Left lung (tissue), 14 donors: ENCODE measurements at regions of chr2 and their contacts with region 1.

Region 1: GRCh38 chr2:230712443-230713330 is at the start of gene CAB39:
- DNase-seq: peak; percentile 89 to 98 (median 92)
- ATAC-seq: peak; percentile 95
- H3K4me3 ChIP-seq: peak within 1 kb of the TSS; percentile 81 to 96
- H3K27ac ChIP-seq: peak within 1 kb of the TSS; percentile 93 to 96
- H3K4me1 ChIP-seq: peaks cover 24 to 67% of the 10 kb centered on the region in 2 donors
- H3K27me3 ChIP-seq: no peaks in the 10 kb centered on the region
- CTCF ChIP-seq: peak; percentile 79 to 94
- polyA plus RNA-seq, gene CAB39: 52.9 to 64.0 (median 61.8) TPM

Region 2: DNA sequence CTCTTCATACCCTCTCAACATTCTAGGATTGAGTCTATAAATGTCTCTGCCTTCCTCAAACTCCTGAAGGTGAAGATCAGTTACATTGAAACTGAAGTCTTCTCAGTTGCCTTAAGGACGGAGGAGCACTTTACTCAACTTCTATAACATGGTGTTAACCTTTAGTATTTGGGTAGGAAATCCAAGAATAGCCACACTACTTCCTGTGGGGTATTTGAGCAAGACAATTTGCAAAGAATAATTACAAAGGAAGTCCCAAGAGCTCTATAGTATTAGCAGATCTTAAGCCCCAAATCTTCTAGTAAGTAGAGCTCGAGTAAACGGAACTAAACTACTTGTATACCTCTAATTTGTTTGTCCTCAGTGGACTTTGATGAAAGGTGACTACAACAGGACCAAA is 215.8 kb before region 1 on chr2:
- intact Hi-C with region 1: no loop called
- DNase-seq: no peak
- ATAC-seq: no peak
- H3K4me3 ChIP-seq: no peak overlapping the region
- H3K27ac ChIP-seq: peak overlapping the region in 1 of 2 donors; percentile 57
- H3K4me1 ChIP-seq: peaks cover 0 to 14% of the 10 kb centered on the region in 2 donors
- H3K27me3 ChIP-seq: no peaks in the 10 kb centered on the region
- CTCF ChIP-seq: no peak

Region 3: GRCh38 chr2:230798769-230799399 is 86.2 kb after region 1 on chr2:
- intact Hi-C with region 1: loop called in 1 of 2 experiments (anchors 5 kb)
- DNase-seq: peak in 2 of 4 donors; percentile 31 to 56
- ATAC-seq: peak; percentile 72
- H3K4me3 ChIP-seq: no peak overlapping the region
- H3K27ac ChIP-seq: peak overlapping the region in 1 of 2 donors; percentile 63
- H3K4me1 ChIP-seq: peaks cover 18 to 54% of the 10 kb centered on the region in 2 donors
- H3K27me3 ChIP-seq: no peaks in the 10 kb centered on the region
- CTCF ChIP-seq: peak; percentile 45 to 54